ENCODE measurements at regions of chr16 and their contacts with region 1.

Region 1: GRCh38 chr16:56944954-56945839 is 13.3 kb downstream of the HERPUD1 start:
- DNase-seq: no peak
- H3K4me3 Mint-ChIP-seq: peak overlapping the region; percentile 12
- H3K27ac Mint-ChIP-seq: peak overlapping the region; percentile 88
- H3K4me1 Mint-ChIP-seq: peaks cover 50% of the 10 kb centered on the region
- H3K27me3 Mint-ChIP-seq: no peaks in the 10 kb centered on the region

Region 2: DNA sequence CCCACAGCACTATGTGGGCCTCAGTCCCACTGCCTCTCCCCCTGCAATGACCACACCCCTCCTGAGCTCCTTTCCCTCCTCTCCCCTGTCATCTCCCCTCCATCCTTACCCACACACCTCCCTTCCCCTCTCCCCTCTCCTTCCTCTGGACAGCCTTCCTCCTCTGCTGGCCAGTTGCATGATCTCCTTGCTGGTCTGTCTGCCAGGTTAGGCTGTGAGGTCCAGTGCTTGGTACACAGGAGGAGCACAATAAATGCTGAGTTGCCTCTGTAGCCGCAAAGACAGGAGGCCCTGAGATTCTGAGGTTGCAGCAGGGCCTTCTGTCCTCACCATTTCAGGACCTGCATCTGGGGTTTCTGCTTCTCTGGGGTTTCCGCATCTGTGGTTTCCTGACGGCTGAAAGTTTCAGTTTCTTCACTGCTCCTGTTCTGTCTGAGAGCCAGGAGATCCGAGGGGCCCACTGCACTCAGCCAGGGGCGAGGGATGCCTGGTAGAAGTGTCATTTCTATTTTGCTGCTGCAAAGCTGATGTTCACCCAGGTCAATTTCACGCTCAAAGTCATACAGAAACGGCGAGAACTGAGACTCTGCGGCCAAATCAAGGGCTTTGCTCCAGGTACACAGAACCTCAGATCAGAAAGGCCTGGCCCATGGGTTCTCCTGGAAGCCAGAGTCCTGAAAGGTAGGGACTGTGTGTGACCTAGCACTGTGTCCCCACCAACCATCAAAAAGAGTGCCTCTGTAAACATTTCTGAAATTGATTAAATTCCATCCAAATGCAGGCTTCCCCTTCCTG is 84.8 kb before region 1 on chr16:
- intact Hi-C with region 1: loop called (anchors 2 kb)
- DNase-seq: peak; percentile 58
- H3K4me3 Mint-ChIP-seq: peak overlapping the region; percentile 59
- H3K27ac Mint-ChIP-seq: peak overlapping the region; percentile 77
- H3K4me1 Mint-ChIP-seq: peaks cover 50% of the 10 kb centered on the region
- H3K27me3 Mint-ChIP-seq: peaks cover 1% of the 10 kb centered on the region

Region 3: GRCh38 chr16:56866943-56867830 is 78.0 kb before region 1 on chr16:
- intact Hi-C with region 1: loop called (anchors 1 kb)
- DNase-seq: peak; percentile 24
- H3K4me3 Mint-ChIP-seq: no peak overlapping the region
- H3K27ac Mint-ChIP-seq: no peak overlapping the region
- H3K4me1 Mint-ChIP-seq: peaks cover 22% of the 10 kb centered on the region
- H3K27me3 Mint-ChIP-seq: no peaks in the 10 kb centered on the region

Region 4: GRCh38 chr16:56931892-56932720 is 13.1 kb before region 1 on chr16 and contains the start of gene HERPUD1:
- intact Hi-C with region 1: loop called (anchors 1 kb)
- DNase-seq: peak; percentile 99
- H3K4me3 Mint-ChIP-seq: peak within 1 kb of the TSS; percentile 95
- H3K27ac Mint-ChIP-seq: peak within 1 kb of the TSS; percentile 94
- H3K4me1 Mint-ChIP-seq: peaks cover 41% of the 10 kb centered on the region
- H3K27me3 Mint-ChIP-seq: no peaks in the 10 kb centered on the region
- total RNA-seq, gene HERPUD1: 176 and 178 TPM in 2 replicates

Region 5: DNA sequence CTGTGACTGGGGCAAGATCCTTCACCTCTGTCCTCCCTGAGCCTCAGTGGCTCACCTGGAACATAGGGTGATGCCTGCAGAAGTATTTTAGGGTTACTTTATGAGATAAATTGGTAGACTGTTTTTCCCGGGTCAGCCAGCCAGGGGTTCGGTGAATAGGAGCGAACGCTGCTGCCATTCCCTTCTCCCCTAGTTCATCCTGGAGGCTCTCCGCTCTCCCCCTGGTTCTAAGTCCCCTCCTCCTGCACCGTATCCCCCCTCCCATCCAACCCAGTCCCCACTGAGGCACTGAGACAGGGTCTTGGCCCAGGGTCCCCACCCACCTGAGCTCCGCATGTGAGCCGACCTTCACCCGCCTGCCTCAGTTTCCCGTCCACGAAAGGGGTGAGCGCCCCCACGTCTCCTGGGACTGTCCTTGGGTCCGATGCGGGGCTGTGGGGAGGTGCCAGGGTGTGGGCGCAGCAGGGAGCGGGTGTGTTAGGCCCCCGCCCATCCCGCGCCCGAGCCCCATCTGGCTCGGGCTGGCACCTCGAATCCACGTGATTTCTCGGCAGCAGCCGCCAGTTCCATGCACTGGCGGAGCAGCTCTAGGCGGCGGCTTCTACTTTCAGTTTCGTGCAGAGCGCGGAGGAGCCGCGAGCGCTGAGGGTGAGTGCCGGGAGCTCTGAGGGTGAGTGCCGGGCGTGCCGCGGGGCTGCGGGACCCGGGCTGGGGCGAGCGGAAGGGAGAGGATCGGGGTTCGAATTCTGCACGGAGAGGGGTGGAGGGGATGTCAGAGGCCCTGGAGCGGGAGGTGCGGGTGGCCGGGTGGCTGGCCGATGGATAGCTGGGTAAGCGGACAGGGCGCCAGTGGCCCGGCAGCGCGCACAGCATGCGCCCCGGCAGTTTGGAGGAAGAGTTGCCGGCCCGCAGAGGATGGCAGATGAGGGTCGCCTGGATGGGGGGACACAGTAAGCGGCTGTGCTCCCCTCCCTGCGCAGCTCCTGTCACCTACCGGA is 44.0 kb after region 1 on chr16 and contains the start of gene NLRC5:
- intact Hi-C with region 1: loop called (anchors 2 kb)
- DNase-seq: peak; percentile 89
- H3K4me3 Mint-ChIP-seq: peak within 1 kb of the TSS; percentile 97
- H3K27ac Mint-ChIP-seq: peak within 1 kb of the TSS; percentile 97
- H3K4me1 Mint-ChIP-seq: peaks cover 83% of the 10 kb centered on the region
- H3K27me3 Mint-ChIP-seq: no peaks in the 10 kb centered on the region
- total RNA-seq, gene NLRC5: 164 and 175 TPM in 2 replicates

Region 6: DNA sequence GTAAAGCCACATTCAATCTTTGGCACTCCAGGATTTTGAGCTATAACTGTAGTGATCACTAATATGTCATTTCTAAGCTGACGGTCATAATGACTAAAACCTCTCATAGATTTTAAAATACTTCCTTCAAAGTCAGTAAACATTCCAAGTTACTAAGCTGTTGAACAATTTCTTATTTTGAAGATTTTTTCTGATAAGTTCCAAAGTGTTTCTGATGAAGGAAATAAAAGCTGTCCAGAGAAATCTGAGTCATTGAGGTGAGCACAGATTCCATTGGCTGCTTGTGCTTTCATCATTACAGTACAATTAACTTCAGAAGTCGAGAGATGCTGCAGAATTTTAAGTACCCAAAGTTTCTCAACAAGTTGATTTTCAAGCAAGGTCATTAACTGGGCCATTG is 68.0 kb after region 1 on chr16:
- intact Hi-C with region 1: loop called (anchors 1 kb)
- DNase-seq: no peak
- H3K4me3 Mint-ChIP-seq: peak overlapping the region; percentile 50
- H3K27ac Mint-ChIP-seq: peak overlapping the region; percentile 81
- H3K4me1 Mint-ChIP-seq: peaks cover 80% of the 10 kb centered on the region
- H3K27me3 Mint-ChIP-seq: no peaks in the 10 kb centered on the region